ENCODE measurements at regions of chr6 and their contacts with region 1.

Region 1: GRCh38 chr6:168264593-168265335 is 54.8 kb downstream of the DACT2 start:
- DNase-seq: peak; percentile 78 to 83
- H3K4me3 ChIP-seq: 0 out of 2 replicates have a peak overlapping the region, but pooled peaks have one; percentile 8
- H3K4me3 Mint-ChIP-seq: peak overlapping the region; percentile 53
- H3K27ac Mint-ChIP-seq: peak overlapping the region; percentile 60
- H3K4me1 ChIP-seq: peaks cover 62% of the 10 kb centered on the region
- H3K4me1 Mint-ChIP-seq: peaks cover 36% of the 10 kb centered on the region
- H3K27me3 ChIP-seq: no peaks in the 10 kb centered on the region
- H3K27me3 Mint-ChIP-seq: no peaks in the 10 kb centered on the region
- CTCF ChIP-seq: no peak

Region 2: DNA sequence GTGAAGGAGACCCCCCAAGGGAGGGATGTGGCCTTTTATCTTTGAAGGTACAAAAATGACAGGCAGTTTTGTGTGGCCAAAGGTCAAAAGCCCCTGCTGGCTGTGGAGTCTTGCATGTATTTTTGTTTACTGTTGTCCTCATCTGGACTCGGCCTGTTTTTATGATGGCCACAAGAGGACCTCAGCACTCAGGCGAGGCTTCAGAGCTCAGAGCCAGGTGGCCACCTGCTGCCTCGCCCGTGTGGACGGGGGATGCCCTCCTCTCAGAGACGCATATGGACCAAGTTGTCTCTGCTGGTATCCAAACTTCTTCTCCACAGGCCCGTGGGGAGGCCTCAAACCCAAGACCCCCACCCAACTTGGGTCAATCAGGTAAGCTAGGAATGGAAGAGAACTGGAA is 63.4 kb before region 1 on chr6:
- CTCF ChIA-PET with region 1: interaction called, 4 read pairs
- POLR2A ChIA-PET with region 1: interaction called, 3 read pairs
- intact Hi-C with region 1: loop called (anchors 5 kb)
- DNase-seq: peak in 1 of 2 experiments; percentile 30
- H3K4me3 ChIP-seq: no peak overlapping the region
- H3K4me3 Mint-ChIP-seq: no peak overlapping the region
- H3K27ac Mint-ChIP-seq: no peak overlapping the region
- H3K4me1 ChIP-seq: no peaks in the 10 kb centered on the region
- H3K4me1 Mint-ChIP-seq: peaks cover 7% of the 10 kb centered on the region
- H3K27me3 ChIP-seq: no peaks in the 10 kb centered on the region
- H3K27me3 Mint-ChIP-seq: no peaks in the 10 kb centered on the region
- CTCF ChIP-seq: peak; percentile 39 to 41

Region 3: DNA sequence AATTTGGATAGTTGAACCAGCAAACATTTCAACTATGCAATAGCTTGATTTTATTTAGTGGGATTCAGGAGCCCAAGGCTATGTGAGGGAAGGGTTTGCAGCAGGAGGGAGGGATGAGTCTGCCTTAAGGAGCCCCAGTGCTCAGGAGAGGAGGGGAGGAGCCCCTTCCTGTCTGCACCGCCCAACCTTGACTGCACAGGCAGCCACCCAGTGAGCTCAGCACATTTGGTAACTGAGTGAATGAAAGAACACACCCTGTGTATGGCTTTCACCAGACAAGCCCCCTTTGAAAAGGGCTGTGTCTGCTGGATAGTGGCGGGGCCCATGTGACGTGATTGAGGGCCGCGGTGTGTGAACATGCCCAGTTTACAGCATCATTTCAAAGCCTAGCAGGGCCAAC is 37.8 kb after region 1 on chr6:
- CTCF ChIA-PET with region 1: interaction called, 5 read pairs
- POLR2A ChIA-PET with region 1: no interaction called
- intact Hi-C with region 1: loop called (anchors 1 kb)
- DNase-seq: no peak
- H3K4me3 ChIP-seq: no peak overlapping the region
- H3K4me3 Mint-ChIP-seq: peak overlapping the region; percentile 65
- H3K27ac Mint-ChIP-seq: no peak overlapping the region
- H3K4me1 ChIP-seq: peaks cover 24% of the 10 kb centered on the region
- H3K4me1 Mint-ChIP-seq: peaks cover 12% of the 10 kb centered on the region
- H3K27me3 ChIP-seq: no peaks in the 10 kb centered on the region
- H3K27me3 Mint-ChIP-seq: no peaks in the 10 kb centered on the region
- CTCF ChIP-seq: no peak

Region 4: GRCh38 chr6:168583821-168584220 is 319.1 kb after region 1 on chr6:
- CTCF ChIA-PET with region 1: no interaction called
- POLR2A ChIA-PET with region 1: no interaction called
- intact Hi-C with region 1: no loop called
- DNase-seq: no peak
- H3K4me3 ChIP-seq: no peak overlapping the region
- H3K4me3 Mint-ChIP-seq: no peak overlapping the region
- H3K27ac Mint-ChIP-seq: no peak overlapping the region
- H3K4me1 ChIP-seq: no peaks in the 10 kb centered on the region
- H3K4me1 Mint-ChIP-seq: no peaks in the 10 kb centered on the region
- H3K27me3 ChIP-seq: no peaks in the 10 kb centered on the region
- H3K27me3 Mint-ChIP-seq: no peaks in the 10 kb centered on the region
- CTCF ChIP-seq: no peak

Measured in Caco-2 (cell line).